ENCODE measurements at regions of chr1 and their contacts with region 1.

Region 1: DNA sequence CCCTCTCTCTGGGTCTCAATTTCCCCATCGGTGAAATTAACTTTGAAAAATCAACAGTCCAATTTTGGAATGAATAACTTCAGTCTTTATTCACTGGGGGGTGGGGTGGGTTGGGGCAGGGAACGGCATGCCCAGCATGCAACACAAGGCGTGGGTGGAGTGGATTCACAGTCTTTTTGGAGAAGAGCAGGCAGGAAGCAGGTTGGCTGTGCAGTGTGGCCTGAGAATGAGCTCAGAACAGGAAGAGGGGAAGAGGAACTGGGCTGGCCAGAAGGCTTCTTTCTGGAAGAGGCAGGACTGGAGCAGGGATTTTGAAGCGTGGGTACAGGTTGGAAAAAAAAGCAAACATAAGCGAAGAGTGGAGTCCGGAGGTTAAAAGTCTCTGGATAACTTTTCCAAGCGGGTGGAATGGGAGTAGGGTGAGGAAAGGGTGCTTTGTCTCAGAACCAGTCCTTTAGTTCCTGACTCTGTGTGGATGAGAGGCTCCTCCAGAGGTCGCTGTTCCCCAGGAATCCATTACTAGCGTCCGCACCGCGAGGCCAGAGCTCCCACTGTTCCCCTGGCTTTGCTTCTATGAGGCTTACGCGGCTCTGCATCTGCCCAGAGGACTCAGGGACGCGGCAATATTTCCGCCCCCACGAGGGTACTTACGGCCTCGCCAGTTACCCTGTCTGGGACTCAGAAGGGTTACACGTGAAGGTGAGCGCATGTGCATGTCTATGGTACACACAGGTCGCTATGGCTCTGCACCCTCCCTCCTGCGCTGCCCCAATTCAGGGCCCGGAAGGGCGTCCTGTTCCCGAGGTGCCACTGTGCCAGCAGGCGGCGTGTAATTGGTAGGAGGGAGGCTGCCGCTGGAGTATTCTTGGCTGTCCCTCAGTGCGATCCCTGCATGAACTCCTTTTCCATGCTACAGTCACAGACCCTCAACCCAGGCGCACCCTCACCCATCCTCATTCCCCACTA is 5.5 kb upstream of the FOXD2 start:
- DNase-seq: peak; percentile 87
- ATAC-seq: peak; percentile 77 to 81

Region 2: DNA sequence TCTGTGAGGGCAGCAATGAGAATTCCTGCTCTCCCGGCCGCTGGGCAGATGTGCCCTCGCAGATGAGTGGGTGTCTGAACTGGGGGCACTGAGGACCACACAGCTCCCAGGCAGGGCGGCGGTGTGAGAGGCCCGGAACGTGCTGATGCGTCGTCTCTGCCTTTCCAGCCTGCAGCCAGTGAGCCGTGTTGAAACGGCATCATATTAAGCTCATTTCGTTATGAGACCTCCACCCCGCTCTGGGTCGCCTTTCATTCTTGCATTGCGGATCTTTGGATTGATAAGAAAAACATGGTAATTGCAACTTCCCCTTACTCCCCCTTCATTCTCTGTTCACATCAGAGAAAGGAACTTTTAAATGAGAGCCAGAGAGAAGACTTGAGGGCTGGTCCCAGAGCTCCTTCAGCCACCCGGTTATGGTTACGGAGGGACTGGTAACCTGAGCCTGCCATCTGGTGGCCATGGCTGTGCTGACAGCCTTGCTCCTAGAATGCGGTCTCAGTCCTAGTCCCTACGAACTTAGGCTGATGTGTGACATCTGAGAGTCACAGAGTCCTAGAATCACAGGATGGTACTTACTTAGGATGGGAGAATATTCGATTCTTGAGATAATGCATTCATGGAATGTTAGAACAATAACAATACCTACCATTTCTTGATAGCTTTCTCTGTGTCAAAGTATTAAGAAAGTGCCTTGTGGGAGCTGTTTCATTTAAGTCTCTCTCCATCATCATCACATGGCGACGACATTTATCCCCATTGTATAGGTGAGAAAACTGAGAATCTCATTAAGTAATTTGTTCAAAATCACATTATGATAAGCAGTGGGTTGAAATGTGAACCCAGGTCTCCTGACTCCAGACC is 293.9 kb after region 1 on chr1:
- intact Hi-C with region 1: loop called in 1 of 2 experiments (anchors 5 kb)
- DNase-seq: peak; percentile 82
- ATAC-seq: peak; percentile 84 to 95

Measured in left cardiac atrium (tissue), 4 donors.